CD4-positive, alpha-beta memory T cell (primary cell): ENCODE measurements at regions of chr5 and their contacts with region 1.

Region 1: GRCh38 chr5:131382407-131383395 is 118.8 kb downstream of the CDC42SE2 start:
- DNase-seq: peak; percentile 79 to 89 (median 84)
- H3K4me3 ChIP-seq: peak overlapping the region in 1 of 2 donors; percentile 33
- H3K4me3 Mint-ChIP-seq: peak overlapping the region; percentile 67 to 90 (median 76)
- H3K27ac ChIP-seq: peak overlapping the region; percentile 99
- H3K27ac Mint-ChIP-seq: peak overlapping the region; percentile 96 to 99 (median 98)
- H3K4me1 ChIP-seq: peaks cover 100% of the 10 kb centered on the region
- H3K4me1 Mint-ChIP-seq: peaks cover 67 to 100% (median 86%) of the 10 kb centered on the region in 4 donors
- H3K27me3 ChIP-seq: no peaks in the 10 kb centered on the region
- H3K27me3 Mint-ChIP-seq: no peaks in the 10 kb centered on the region

Region 2: DNA sequence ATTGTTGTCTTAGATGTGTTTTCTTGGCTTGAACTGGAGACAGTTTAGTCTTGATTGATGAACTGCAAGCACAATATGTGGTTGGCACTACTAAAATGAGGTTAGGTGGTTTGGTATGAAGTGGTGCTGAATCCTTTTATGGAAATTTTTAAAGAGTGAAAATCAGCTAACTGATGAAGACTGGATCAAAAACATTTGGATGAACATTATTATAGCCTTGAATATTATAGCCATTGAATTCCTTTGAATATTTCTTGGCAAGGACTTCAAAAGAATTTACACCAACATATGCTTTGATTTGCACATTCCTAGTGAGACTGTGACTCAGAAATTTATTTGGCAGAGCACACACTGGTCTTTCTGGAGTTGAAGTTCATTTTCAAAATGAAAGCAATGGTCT is 1160.1 kb before region 1 on chr5:
- CTCF ChIA-PET with region 1: no interaction called
- POLR2A ChIA-PET with region 1: no interaction called
- intact Hi-C with region 1: no loop called
- DNase-seq: no peak
- H3K4me3 ChIP-seq: no peak overlapping the region
- H3K4me3 Mint-ChIP-seq: no peak overlapping the region
- H3K27ac ChIP-seq: no peak overlapping the region
- H3K27ac Mint-ChIP-seq: no peak overlapping the region
- H3K4me1 ChIP-seq: no peaks in the 10 kb centered on the region
- H3K4me1 Mint-ChIP-seq: no peaks in the 10 kb centered on the region
- H3K27me3 ChIP-seq: no peaks in the 10 kb centered on the region
- H3K27me3 Mint-ChIP-seq: peaks cover 0 to 5% of the 10 kb centered on the region in 2 donors

Region 3: DNA sequence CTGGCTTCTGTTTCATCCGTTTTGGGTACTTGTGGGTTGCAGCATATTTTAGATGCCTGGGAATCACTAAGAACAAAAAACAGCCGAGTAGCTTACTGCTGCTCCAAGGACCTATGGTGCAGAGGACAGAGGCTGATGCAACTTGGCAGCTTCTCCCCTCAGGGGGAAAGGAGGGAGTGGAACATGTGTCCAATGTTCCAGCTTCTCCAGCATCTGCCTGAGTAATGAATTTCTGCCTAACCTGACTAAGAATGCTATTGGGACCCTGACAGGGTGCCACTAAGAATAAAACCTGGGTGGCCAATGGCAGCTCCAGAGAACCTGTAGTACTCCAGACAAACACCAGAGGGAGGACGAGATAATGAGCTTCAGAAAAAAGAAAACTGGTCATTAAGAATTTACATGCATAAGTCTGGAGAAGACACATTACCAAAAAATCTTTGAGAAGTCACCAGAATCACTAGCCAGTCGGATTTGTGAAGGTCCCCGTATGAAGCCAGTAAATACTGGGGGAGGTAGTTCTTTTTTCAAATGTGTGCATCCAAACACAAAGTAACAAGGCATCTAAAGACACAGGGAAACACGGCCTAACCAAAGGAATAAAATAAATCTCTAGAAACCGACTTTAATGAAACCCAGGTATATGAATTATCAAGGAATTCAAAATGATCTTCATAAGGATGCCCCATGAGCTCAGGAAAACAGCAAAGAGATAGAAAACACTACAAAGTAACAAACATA is 511.2 kb before region 1 on chr5:
- CTCF ChIA-PET with region 1: interaction called, 5 read pairs
- POLR2A ChIA-PET with region 1: no interaction called
- intact Hi-C with region 1: loop called (anchors 1 kb)
- DNase-seq: peak; percentile 34 to 60 (median 49)
- H3K4me3 ChIP-seq: no peak overlapping the region
- H3K4me3 Mint-ChIP-seq: no peak overlapping the region
- H3K27ac ChIP-seq: no peak overlapping the region
- H3K27ac Mint-ChIP-seq: no peak overlapping the region
- H3K4me1 ChIP-seq: no peaks in the 10 kb centered on the region
- H3K4me1 Mint-ChIP-seq: no peaks in the 10 kb centered on the region
- H3K27me3 ChIP-seq: no peaks in the 10 kb centered on the region
- H3K27me3 Mint-ChIP-seq: no peaks in the 10 kb centered on the region

Region 4: DNA sequence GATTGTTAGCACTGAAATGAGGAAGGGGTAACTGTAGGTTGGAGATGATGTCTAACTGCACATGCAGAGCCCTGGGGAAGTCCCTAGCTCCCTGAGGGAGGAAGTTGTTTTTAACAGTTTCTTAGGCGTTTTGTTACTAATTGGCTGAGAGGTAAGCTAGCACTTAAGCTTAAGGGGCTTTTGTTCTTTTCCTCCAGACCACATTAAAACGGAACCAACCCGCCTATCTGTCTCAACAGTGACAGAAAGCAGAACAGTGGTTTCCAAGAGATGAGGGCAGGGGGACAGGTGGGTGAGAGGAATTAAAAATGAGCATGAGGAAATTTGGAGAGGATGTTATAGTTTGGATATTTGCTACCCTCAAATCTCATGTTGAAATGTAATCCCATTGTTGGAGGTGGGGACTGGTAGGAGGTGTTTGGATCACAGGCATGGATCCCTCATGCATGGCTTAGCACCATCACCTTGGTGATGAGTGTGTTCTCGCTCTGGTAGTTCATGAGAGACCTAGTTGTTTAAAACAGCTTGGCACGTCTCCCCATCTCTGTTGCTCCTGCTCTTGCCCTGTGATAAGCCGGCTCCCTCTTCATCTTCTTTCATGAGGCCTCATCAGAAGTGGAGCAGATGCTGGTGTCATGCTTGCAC is 173.1 kb before region 1 on chr5:
- CTCF ChIA-PET with region 1: interaction called, 12 read pairs
- POLR2A ChIA-PET with region 1: interaction called, 5 read pairs
- intact Hi-C with region 1: loop called (anchors 1 kb)
- DNase-seq: peak; percentile 78 to 87 (median 81)
- H3K4me3 ChIP-seq: peak overlapping the region in 1 of 2 donors; percentile 16
- H3K4me3 Mint-ChIP-seq: peak overlapping the region; percentile 58 to 89 (median 84)
- H3K27ac ChIP-seq: peak overlapping the region; percentile 75
- H3K27ac Mint-ChIP-seq: peak overlapping the region; percentile 91 to 99 (median 98)
- H3K4me1 ChIP-seq: peaks cover 57% of the 10 kb centered on the region
- H3K4me1 Mint-ChIP-seq: peaks cover 39 to 59% (median 50%) of the 10 kb centered on the region in 4 donors
- H3K27me3 ChIP-seq: no peaks in the 10 kb centered on the region
- H3K27me3 Mint-ChIP-seq: no peaks in the 10 kb centered on the region

Region 5: DNA sequence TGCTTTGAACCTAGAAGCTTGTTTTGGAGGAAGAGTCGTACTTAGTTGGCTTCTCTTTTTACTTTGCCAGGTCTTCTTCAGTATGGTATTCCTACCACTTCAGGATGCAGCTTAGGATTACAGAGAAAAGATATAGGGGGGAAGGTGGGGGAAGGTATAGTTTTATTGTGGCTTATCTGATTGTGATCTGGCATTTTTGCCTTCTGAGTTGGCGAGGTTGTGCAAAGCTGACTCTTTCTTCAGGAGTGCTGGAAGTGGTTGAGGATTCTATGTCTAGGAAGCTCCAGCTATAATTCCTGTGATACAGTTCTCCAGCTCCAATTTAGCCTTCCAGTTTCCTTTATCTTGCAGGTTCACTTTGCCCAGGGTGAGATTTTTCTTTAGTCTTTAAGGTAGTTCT is 111.9 kb before region 1 on chr5:
- CTCF ChIA-PET with region 1: interaction called, 68 read pairs
- POLR2A ChIA-PET with region 1: interaction called, 552 read pairs
- intact Hi-C with region 1: no loop called
- DNase-seq: no peak
- H3K4me3 ChIP-seq: peak overlapping the region in 1 of 2 donors; percentile 55
- H3K4me3 Mint-ChIP-seq: peak overlapping the region; percentile 84 to 93 (median 90)
- H3K27ac ChIP-seq: peak overlapping the region; percentile 71
- H3K27ac Mint-ChIP-seq: peak overlapping the region; percentile 88 to 100 (median 95)
- H3K4me1 ChIP-seq: peaks cover 83% of the 10 kb centered on the region
- H3K4me1 Mint-ChIP-seq: peaks cover 38 to 79% (median 57%) of the 10 kb centered on the region in 4 donors
- H3K27me3 ChIP-seq: no peaks in the 10 kb centered on the region
- H3K27me3 Mint-ChIP-seq: no peaks in the 10 kb centered on the region

Region 6: GRCh38 chr5:131316026-131316425 is 66.7 kb before region 1 on chr5:
- CTCF ChIA-PET with region 1: interaction called, 5 read pairs
- POLR2A ChIA-PET with region 1: interaction called, 4 read pairs
- intact Hi-C with region 1: loop called (anchors 2 kb)
- DNase-seq: no peak
- H3K4me3 ChIP-seq: no peak overlapping the region
- H3K4me3 Mint-ChIP-seq: peak overlapping the region in 3 of 8 donors; percentile 9 to 44 (median 11)
- H3K27ac ChIP-seq: no peak overlapping the region
- H3K27ac Mint-ChIP-seq: peak overlapping the region; percentile 3 to 94 (median 32)
- H3K4me1 ChIP-seq: peaks cover 77% of the 10 kb centered on the region
- H3K4me1 Mint-ChIP-seq: peaks cover 58 to 88% (median 73%) of the 10 kb centered on the region in 4 donors
- H3K27me3 ChIP-seq: no peaks in the 10 kb centered on the region
- H3K27me3 Mint-ChIP-seq: no peaks in the 10 kb centered on the region

Region 7: DNA sequence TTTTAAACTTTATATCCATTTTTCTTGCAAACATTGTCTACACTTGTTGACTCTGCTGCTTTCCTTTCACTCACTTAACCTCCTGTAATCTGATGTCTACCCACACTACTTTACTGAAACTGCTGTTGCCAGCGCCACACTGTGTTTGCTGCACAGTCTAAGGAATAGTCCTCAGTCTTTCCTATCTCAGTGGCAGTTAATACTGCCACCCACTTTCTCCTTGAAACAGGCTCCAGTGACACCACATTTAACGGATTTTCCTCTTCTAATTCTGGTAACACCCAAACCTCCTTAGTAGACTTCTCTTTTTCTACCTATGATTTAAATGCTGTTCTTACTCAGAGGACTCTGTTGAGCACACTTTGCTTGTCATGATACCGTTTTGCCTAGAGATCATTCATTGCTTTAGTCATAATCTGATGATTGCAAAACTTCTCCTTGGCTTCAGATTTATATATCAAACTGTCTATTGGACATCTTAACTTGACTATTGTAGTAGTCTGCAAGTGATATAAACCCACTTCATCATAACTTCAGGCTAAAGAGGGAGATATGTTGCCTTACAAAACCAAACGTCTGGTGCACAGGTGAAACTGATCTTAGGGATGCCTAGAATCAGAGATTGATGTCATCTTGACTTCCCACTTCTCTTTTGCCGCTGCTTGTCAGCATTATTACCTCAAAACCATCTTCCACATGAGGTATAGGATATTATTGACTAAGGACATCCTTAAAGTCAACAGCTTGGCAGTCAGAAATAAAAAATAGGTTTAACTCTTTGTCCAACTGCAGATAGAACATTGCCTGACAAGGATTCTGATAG is 24.8 kb before region 1 on chr5:
- CTCF ChIA-PET with region 1: interaction called, 48 read pairs
- POLR2A ChIA-PET with region 1: interaction called, 22 read pairs
- intact Hi-C with region 1: no loop called
- DNase-seq: peak in 2 of 5 donors; percentile 39 to 44
- H3K4me3 ChIP-seq: no peak overlapping the region
- H3K4me3 Mint-ChIP-seq: peak overlapping the region; percentile 6 to 70 (median 63)
- H3K27ac ChIP-seq: peak overlapping the region; percentile 45
- H3K27ac Mint-ChIP-seq: peak overlapping the region; percentile 66 to 92 (median 90)
- H3K4me1 ChIP-seq: peaks cover 85% of the 10 kb centered on the region
- H3K4me1 Mint-ChIP-seq: peaks cover 49 to 76% (median 66%) of the 10 kb centered on the region in 4 donors
- H3K27me3 ChIP-seq: no peaks in the 10 kb centered on the region
- H3K27me3 Mint-ChIP-seq: no peaks in the 10 kb centered on the region

Region 8: DNA sequence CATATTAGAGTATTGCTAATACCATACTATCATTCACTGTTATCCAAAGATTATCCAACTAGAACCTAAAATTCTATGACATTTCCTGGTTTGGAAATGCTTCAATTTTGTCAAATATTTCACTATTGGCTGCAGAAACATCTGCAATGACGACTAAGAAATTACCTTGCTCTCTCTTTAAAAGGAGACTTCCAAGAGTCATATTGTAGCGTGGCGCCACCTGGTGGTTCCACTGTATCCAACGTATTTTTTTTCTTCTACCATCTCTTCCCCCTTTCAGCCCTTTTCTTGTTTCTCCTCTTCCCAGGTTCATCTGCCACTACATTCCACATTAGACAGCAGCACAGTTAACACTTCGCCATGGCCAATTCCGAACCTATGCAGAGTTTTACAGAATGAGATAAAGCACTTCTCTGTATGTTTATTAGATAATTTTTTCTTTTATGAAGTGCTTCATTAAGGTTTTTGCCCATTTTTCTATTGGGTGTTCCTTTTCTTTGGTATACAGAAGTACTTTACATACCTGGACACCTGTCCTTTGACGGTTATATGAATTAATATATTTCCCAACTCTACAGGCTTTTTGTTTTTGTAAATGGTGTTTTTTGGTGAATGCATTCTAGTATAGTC is 34.7 kb after region 1 on chr5:
- CTCF ChIA-PET with region 1: interaction called, 37 read pairs
- POLR2A ChIA-PET with region 1: interaction called, 10 read pairs
- intact Hi-C with region 1: loop called (anchors 1 kb)
- DNase-seq: peak; percentile 71 to 79 (median 77)
- H3K4me3 ChIP-seq: no peak overlapping the region
- H3K4me3 Mint-ChIP-seq: peak overlapping the region in 7 of 8 donors; percentile 5 to 81 (median 60)
- H3K27ac ChIP-seq: peak overlapping the region; percentile 45
- H3K27ac Mint-ChIP-seq: peak overlapping the region; percentile 68 to 92 (median 85)
- H3K4me1 ChIP-seq: peaks cover 37% of the 10 kb centered on the region
- H3K4me1 Mint-ChIP-seq: peaks cover 35 to 56% (median 46%) of the 10 kb centered on the region in 4 donors
- H3K27me3 ChIP-seq: no peaks in the 10 kb centered on the region
- H3K27me3 Mint-ChIP-seq: no peaks in the 10 kb centered on the region